BJ (cell line): ENCODE measurements at regions of chr22 and their contacts with region 1.

Region 1: DNA sequence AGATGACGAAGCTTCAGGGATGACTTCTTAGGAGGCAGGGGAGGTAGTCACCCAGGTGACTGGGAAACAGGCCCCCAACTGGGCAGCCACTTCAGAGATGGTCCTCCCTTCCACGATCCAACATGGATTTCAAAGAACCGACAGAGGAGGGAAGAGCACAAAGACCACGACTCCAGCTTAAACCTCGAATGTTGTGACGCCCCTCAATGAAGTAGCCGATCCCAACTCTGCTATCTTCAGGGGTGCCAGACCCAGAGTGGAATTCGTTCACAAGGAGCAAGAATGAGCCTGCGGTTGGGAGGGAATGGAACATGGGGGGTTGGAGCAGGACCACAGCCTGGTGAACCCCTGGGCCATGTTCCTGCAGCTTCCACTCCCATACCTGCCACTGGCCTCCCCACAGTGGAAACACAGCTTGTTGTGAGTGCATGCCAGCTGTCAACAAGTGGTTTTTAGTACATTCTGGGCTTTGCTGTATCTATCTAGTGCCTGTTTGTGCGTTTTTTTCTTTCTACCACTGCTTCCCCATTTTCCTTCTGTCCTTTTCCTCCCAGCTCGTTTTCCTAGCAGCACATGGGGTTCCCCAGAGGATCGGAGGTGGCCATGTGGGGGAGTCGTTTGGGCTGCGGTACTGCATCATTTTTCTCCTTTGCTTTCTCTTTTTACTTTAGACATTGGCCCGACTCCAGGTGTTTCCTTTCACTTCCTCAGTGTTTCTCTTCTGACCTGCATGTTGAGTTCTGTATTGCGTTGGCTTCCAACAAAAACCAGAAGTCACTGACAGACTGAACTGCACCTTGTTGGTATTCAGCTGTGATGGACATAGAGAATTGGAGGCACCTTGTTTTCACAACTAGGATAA is 65.8 kb downstream of the MORC2 start:
- DNase-seq: no peak
- H3K4me3 ChIP-seq: no peak overlapping the region
- H3K27me3 ChIP-seq: no peaks in the 10 kb centered on the region
- CTCF ChIP-seq: no peak

Region 2: GRCh38 chr22:30955153-30955552 is 52.4 kb after region 1 on chr22:
- CTCF ChIA-PET with region 1: no interaction called
- POLR2A ChIA-PET with region 1: interaction called, 27 read pairs
- DNase-seq: no peak
- H3K4me3 ChIP-seq: no peak overlapping the region
- H3K27me3 ChIP-seq: no peaks in the 10 kb centered on the region
- CTCF ChIP-seq: no peak